ENCODE measurements at regions of chr3 and their contacts with region 1.

Region 1: DNA sequence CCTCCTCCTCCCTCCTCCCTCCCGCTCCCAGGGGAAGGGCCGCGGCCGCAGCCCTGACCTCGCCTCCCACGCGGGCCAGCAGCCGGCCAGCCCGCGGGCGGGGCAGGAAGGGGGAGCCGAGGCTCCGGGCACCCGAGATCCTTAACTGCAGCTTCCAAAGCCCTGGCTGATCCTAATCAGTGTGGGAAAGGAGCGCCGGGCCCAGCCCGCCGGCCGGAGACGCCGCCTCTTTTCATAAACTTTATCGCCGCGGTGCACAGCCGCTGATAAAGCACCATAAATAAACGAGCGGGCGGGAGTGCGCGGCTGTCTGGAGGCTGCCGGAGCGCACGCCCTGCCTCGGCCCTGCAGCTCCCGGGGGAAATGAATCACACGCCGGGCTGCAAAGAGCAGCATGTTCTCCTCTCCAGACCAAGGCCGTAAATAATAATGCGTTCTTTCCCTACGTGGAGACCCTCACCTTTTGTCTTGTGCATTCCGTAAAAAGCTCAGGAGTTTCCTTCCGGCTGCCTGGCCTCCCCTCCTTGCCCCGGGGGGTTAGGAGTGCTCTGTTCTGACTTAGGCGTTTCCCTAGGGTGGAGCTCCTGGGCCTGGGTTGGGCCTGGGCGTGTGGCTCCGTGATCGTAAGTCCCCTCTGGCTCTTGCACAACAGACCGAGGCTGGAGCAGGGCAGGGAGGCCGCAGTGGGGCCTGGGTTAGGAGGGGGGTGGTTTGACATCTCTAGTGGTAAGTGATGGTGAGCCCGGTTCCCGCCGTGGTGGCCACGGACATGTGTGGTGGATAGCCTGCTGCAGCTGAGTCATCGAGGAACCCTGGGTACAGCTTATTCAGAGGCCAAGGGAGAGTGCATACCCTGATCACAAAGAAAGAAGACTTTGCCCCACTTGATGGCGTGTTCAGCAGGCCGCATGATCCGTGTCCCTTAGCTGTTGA is 132.6 kb upstream of the HES1 start:
- DNase-seq: peak; percentile 97
- H3K4me3 ChIP-seq: peak overlapping the region; percentile 54 to 58 (median 56)
- H3K27ac ChIP-seq: peak overlapping the region; percentile 75 to 82 (median 76)
- H3K4me1 ChIP-seq: peaks cover 23 to 38% (median 32%) of the 10 kb centered on the region in 4 donors
- H3K27me3 ChIP-seq: no peaks in the 10 kb centered on the region
- CTCF ChIP-seq: no peak
- EP300 ChIP-seq: no peak
- POLR2A ChIP-seq: no peak

Region 2: DNA sequence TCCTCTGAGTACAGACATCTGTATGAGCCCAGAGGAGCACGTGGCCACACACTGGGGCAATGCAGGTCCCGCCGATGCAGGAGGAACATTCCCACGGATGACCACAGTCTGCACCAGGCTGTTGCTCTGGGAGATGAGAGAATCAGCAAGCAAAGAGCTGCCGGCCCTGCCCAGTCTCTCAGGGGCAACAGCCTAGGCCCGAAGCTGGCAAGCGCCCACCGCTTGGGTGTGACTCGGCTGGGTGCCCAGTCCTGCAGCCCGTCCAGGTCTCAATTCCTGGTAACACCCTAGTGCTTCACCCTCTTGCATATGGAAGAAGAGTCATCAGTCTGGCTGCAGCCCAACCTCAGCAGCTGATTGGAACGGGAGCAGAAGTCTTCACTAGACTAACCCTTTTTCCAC is 21.1 kb before region 1 on chr3:
- intact Hi-C with region 1: no loop called
- DNase-seq: peak; percentile 93
- H3K4me3 ChIP-seq: no peak overlapping the region
- H3K27ac ChIP-seq: peak overlapping the region in 1 of 4 donors; percentile 1
- H3K4me1 ChIP-seq: peaks cover 24 to 39% (median 38%) of the 10 kb centered on the region in 4 donors
- H3K27me3 ChIP-seq: no peaks in the 10 kb centered on the region
- CTCF ChIP-seq: no peak
- EP300 ChIP-seq: no peak
- POLR2A ChIP-seq: no peak

Region 3: DNA sequence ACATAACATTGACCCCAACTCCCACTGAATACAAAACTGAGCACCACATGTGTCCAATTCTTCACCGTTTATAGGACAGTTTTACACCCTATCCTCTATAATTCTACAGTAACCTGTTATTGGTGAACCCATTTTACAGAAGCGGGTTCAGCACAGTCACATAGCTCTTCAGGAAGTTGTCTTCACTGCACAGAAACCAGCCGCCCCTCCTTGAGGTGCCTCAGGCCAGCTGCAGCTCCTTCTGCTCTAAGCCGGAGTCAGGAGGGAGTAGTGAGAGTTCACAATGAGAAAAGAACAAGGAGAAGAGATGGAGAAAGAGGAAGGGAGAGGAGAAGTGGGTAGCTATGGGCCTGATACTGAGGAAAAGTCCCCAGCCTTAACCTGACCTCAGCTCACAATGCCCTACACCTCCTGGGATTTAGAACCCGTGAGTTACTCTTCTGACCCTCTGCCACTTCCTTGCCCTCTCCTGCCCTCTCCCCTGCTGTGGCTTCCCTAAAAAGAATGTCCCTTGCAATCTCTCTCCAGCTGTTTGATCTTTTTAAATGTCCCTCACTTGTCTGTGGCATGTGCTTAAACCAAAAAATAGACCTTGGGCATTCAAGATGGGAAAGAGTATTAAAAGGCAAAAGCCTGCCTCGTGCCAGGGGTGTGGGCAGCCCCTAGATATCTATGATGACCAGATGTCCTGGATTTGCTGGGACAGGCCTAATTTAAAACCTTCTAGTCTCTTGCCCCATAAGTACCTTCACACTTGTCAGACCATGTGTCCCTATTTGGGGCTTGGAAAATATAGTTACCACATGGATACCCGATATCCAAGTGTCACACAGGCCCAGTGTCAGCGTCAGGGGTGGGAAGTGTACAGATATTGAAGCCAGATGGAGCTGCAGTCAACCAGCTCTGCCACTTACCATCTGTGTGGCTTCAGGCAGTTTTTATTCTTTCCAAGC is 61.3 kb after region 1 on chr3:
- intact Hi-C with region 1: loop called (anchors 5 kb)
- DNase-seq: no peak
- H3K4me3 ChIP-seq: no peak overlapping the region
- H3K27ac ChIP-seq: no peak overlapping the region
- H3K4me1 ChIP-seq: peaks cover 0 to 4% (median 0%) of the 10 kb centered on the region in 4 donors
- H3K27me3 ChIP-seq: no peaks in the 10 kb centered on the region
- CTCF ChIP-seq: no peak
- EP300 ChIP-seq: no peak
- POLR2A ChIP-seq: no peak

Measured in esophagus muscularis mucosa (tissue), 4 donors.